GM12878 (cell line): ENCODE measurements at regions of chr13 and their contacts with region 1.

Region 1: DNA sequence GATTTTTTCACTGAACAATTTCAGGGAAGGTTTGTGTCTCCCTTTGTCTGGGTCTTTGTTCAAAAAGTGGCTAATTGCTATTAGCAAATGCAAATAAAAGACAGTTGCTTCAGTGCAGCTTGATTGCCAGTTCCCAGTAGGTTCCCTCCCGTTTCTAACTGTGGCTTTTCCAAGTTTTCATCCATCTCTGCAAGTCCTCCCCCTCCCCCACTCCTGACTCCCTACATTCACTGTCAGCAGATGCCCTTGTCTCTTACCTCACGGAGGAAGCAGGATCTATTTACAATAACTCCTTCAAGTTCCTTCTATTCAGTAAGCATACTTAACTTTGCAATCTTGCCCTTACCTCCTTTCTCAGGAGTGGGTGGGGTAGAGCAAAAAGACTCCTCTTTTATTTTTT is 55.4 kb upstream of the SCEL start:
- DNase-seq: no peak
- ATAC-seq: no peak
- H3K4me3 ChIP-seq: no peak overlapping the region
- H3K27ac ChIP-seq: no peak overlapping the region
- H3K4me1 ChIP-seq: peaks cover 6% of the 10 kb centered on the region
- H3K27me3 ChIP-seq: no peaks in the 10 kb centered on the region
- CTCF ChIP-seq: no peak
- EP300 ChIP-seq: no peak
- POLR2A ChIP-seq: no peak
- RAD21 ChIP-seq: no peak

Region 2: GRCh38 chr13:77239312-77239711 is 240.8 kb before region 1 on chr13:
- CTCF ChIA-PET with region 1: interaction called, 3 read pairs
- POLR2A ChIA-PET with region 1: no interaction called
- RAD21 ChIA-PET with region 1: interaction called, 5 read pairs
- SMC1A ChIA-PET with region 1: interaction called, 16 read pairs
- in situ Hi-C with region 1: no loop called
- intact Hi-C with region 1: no loop called
- DNase-seq: no peak
- ATAC-seq: no peak
- H3K4me3 ChIP-seq: no peak overlapping the region
- H3K27ac ChIP-seq: no peak overlapping the region
- H3K4me1 ChIP-seq: no peaks in the 10 kb centered on the region
- H3K27me3 ChIP-seq: no peaks in the 10 kb centered on the region
- CTCF ChIP-seq: no peak
- EP300 ChIP-seq: no peak
- POLR2A ChIP-seq: no peak
- RAD21 ChIP-seq: no peak

Region 3: GRCh38 chr13:77291774-77292173 is 188.3 kb before region 1 on chr13:
- CTCF ChIA-PET with region 1: interaction called, 14 read pairs
- POLR2A ChIA-PET with region 1: no interaction called
- RAD21 ChIA-PET with region 1: interaction called, 19 read pairs
- SMC1A ChIA-PET with region 1: interaction called, 28 read pairs
- in situ Hi-C with region 1: no loop called
- intact Hi-C with region 1: no loop called
- DNase-seq: no peak
- ATAC-seq: peak; percentile 77
- H3K4me3 ChIP-seq: no peak overlapping the region
- H3K27ac ChIP-seq: peak overlapping the region; percentile 30; the same call in 1 of the 2 replicates
- H3K4me1 ChIP-seq: peaks cover 11% of the 10 kb centered on the region
- H3K27me3 ChIP-seq: no peaks in the 10 kb centered on the region
- CTCF ChIP-seq: no peak
- EP300 ChIP-seq: no peak
- POLR2A ChIP-seq: no peak
- RAD21 ChIP-seq: no peak

Region 4: DNA sequence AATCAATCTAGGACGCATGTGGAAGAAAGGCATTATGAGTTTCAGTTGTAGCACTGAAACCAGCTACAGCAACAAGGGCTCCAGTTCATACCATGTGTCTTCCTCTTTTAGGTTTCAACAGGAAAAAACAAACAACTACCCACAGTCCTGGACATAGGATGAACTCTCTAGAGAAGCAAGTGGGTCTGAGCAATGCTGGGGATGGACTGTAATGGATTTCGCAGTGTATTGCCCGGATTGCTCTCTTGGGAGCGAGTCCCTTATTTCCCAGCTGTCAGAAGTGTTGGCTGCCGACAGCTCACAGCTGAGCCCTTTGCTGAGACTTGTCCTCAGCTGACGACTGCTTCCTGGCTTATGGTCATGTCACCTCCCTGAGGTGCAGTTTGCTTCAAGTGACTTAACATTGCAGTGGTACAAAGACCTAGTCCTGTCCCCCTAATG is 141.1 kb before region 1 on chr13:
- CTCF ChIA-PET with region 1: interaction called, 62 read pairs
- POLR2A ChIA-PET with region 1: interaction called, 9 read pairs
- RAD21 ChIA-PET with region 1: interaction called, 38 read pairs
- SMC1A ChIA-PET with region 1: interaction called, 39 read pairs
- in situ Hi-C with region 1: loop called (anchors 5 kb)
- intact Hi-C with region 1: no loop called
- DNase-seq: no peak
- ATAC-seq: peak; percentile 78
- H3K4me3 ChIP-seq: peak overlapping the region; percentile 45
- H3K27ac ChIP-seq: peak overlapping the region; percentile 89
- H3K4me1 ChIP-seq: peaks cover 37% of the 10 kb centered on the region
- H3K27me3 ChIP-seq: no peaks in the 10 kb centered on the region
- CTCF ChIP-seq: no peak
- EP300 ChIP-seq: no peak
- POLR2A ChIP-seq: 0 out of 2 replicates have a peak, but pooled peaks have one; percentile 41
- RAD21 ChIP-seq: peak; percentile 28; the same call in 1 of the 2 replicates

Region 5: GRCh38 chr13:77429320-77430142 is 50.5 kb before region 1 on chr13:
- CTCF ChIA-PET with region 1: interaction called, 31 read pairs
- POLR2A ChIA-PET with region 1: interaction called, 34 read pairs
- RAD21 ChIA-PET with region 1: interaction called, 51 read pairs
- SMC1A ChIA-PET with region 1: interaction called, 98 read pairs
- in situ Hi-C with region 1: no loop called
- intact Hi-C with region 1: loop called (anchors 1 kb)
- DNase-seq: peak; percentile 93
- ATAC-seq: peak; percentile 63
- H3K4me3 ChIP-seq: peak overlapping the region; percentile 47
- H3K27ac ChIP-seq: peak overlapping the region; percentile 85
- H3K4me1 ChIP-seq: peaks cover 26% of the 10 kb centered on the region
- H3K27me3 ChIP-seq: no peaks in the 10 kb centered on the region
- CTCF ChIP-seq: no peak
- EP300 ChIP-seq: peak; percentile 64 to 73; a peak in 3 of 4 replicates
- POLR2A ChIP-seq: no peak
- RAD21 ChIP-seq: peak; percentile 21; the same call in 1 of the 2 replicates

Region 6: DNA sequence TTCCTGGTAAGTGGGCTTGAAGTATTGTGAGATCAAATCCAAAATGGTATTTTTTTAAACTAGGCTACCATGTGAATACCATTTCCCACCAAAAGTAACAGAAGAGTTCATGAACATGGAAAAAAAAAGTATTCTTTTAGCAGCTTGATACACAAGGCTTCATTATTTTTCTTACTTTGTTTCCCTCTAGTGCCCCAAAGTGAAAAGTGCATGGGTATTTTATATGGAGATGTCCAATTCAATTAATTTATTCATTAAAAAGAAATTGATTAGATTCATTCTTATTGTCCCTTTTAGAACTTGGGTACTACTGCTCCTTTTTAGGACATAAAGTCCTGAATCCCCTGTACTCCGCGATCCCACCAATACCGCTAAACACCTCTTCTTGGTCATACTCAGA is 26.8 kb after region 1 on chr13:
- CTCF ChIA-PET with region 1: interaction called, 9 read pairs
- POLR2A ChIA-PET with region 1: interaction called, 3 read pairs
- RAD21 ChIA-PET with region 1: interaction called, 6 read pairs
- SMC1A ChIA-PET with region 1: interaction called, 13 read pairs
- in situ Hi-C with region 1: no loop called
- intact Hi-C with region 1: no loop called
- DNase-seq: no peak
- ATAC-seq: no peak
- H3K4me3 ChIP-seq: no peak overlapping the region
- H3K27ac ChIP-seq: no peak overlapping the region
- H3K4me1 ChIP-seq: peaks cover 17% of the 10 kb centered on the region
- H3K27me3 ChIP-seq: no peaks in the 10 kb centered on the region
- CTCF ChIP-seq: peak; percentile 16 to 32 (median 22); a peak in 3 of 6 replicates
- EP300 ChIP-seq: no peak
- POLR2A ChIP-seq: no peak
- RAD21 ChIP-seq: peak; percentile 18; the same call in 1 of the 2 replicates

Region 7: DNA sequence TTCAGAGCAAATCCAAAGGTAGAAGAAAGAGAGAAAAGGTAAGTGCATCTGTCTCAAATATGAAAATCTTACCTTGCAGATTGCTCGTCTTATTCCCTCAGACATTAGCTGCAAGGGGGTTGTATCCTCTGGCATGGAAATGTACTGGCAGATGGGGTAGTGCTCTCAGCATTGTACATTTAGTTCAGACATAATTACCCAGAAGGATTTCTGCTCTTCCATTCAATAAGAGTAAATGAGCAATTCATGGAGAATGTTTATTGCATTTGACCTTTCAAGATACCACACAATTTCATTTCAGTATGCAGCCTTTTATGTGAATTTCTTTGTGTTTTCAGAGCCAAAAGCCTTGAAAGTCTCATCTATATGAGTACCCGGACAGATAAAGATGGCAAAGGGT is 119.3 kb after region 1 on chr13:
- CTCF ChIA-PET with region 1: no interaction called
- POLR2A ChIA-PET with region 1: no interaction called
- RAD21 ChIA-PET with region 1: no interaction called
- SMC1A ChIA-PET with region 1: no interaction called
- in situ Hi-C with region 1: no loop called
- intact Hi-C with region 1: no loop called
- DNase-seq: no peak
- ATAC-seq: no peak
- H3K4me3 ChIP-seq: no peak overlapping the region
- H3K27ac ChIP-seq: no peak overlapping the region
- H3K4me1 ChIP-seq: no peaks in the 10 kb centered on the region
- H3K27me3 ChIP-seq: peaks cover 0 to 7% of the 10 kb centered on the region in 2 experiments; a peak in 2 of 4 replicates
- CTCF ChIP-seq: no peak
- EP300 ChIP-seq: no peak
- POLR2A ChIP-seq: no peak
- RAD21 ChIP-seq: no peak